ENCODE measurements at regions of chr7 and their contacts with region 1.

Region 1: GRCh38 chr7:83410989-83411591 is 237.8 kb downstream of the SEMA3E start:
- DNase-seq: peak; percentile 11 to 32
- H3K4me3 ChIP-seq: no peak overlapping the region
- H3K27ac ChIP-seq: no peak overlapping the region
- H3K4me1 ChIP-seq: no peaks in the 10 kb centered on the region
- H3K27me3 ChIP-seq: no peaks in the 10 kb centered on the region
- CTCF ChIP-seq: peak in 4 of 6 experiments; percentile 45 to 68 (median 62)
- POLR2A ChIP-seq: no peak

Region 2: GRCh38 chr7:83655951-83656556 is 245.0 kb after region 1 on chr7:
- intact Hi-C with region 1: loop called (anchors 10 kb)
- DNase-seq: peak; percentile 48 to 52
- H3K4me3 ChIP-seq: no peak overlapping the region
- H3K27ac ChIP-seq: no peak overlapping the region
- H3K4me1 ChIP-seq: no peaks in the 10 kb centered on the region
- H3K27me3 ChIP-seq: no peaks in the 10 kb centered on the region
- CTCF ChIP-seq: peak in 5 of 6 experiments; percentile 66 to 87 (median 78)
- POLR2A ChIP-seq: no peak

Measured in thyroid gland (tissue), 4 donors.